ENCODE measurements at regions of chr4 and their contacts with region 1.

Region 1: GRCh38 chr4:112946127-112946526 is 103.3 kb upstream of the ANK2 start:
- DNase-seq: no peak

Region 2: GRCh38 chr4:112130906-112131305 is 815.2 kb before region 1 on chr4:
- intact Hi-C with region 1: no loop called
- DNase-seq: no peak

Region 3: DNA sequence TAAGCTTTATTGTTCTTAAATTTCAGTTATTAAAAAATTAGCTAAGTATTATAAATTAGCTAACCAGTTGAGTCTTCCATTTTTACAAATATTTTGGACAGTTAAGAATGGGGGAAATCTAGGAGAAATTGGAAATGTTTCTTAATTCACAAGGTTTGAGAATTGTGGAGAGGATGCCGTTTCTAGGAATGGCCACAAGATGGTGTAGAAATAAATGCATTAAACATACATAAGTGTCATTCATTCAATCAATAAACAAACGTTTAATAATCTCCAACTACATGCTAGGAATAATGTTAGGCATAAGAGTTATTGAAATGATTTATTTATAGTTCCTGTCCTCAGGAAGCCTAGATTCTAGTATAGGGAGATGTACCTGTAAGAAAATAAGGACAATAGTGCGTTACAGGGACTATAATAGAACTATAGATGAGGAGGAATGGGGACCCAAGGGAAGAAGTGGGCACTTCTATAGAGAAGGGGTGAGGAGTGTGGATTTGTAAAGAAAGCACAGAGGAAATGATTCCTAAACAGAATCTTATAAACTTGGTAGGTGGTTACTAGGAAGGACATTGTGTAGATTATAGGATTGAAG is 92.4 kb before region 1 on chr4:
- intact Hi-C with region 1: loop called (anchors 5 kb)
- DNase-seq: peak in 1 of 42 donors; percentile 55

Measured in head of caudate nucleus (tissue), 42 donors.